ENCODE measurements at regions of chr19 and their contacts with region 1.

Region 1: DNA sequence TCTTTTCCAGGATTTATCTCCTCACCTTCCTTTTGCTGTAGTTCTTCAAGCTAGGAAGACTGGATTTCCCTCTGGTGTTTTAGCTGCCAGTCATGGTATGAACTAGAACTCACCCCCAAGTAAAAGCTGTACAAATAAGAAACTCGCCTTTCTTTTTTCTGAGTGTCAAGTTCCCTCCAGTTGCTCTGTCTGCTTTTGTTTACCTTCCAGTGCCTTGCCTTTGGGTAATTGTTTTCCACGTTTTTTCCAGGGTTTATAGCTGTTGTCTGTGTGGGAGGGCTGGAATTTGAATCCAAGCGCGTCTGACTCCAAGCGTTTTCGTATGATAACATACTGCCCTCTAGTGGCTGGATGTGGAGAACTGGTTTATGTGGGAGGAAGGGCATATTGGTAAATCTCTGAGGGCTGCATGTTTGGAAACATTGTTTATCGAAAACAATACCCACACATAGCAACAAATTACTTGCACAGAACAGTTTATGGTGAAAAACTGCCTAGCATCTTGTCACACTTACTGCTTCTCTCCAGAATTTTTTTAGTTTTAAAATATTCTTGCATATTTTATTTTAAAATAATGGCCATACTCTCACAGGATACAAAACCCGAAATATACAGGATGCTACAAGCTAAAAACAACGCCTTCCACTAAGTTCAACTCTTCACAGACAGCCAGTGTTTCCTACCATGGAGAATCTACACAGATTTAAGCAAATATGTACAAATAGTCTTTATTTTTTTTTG is 19.2 kb downstream of the RCN3 start:
- DNase-seq: peak; percentile 88
- ATAC-seq: peak; percentile 63
- H3K4me3 ChIP-seq: peak overlapping the region in 2 of 5 experiments; percentile 1 to 18
- H3K4me3 Mint-ChIP-seq: peak overlapping the region; percentile 73
- H3K27ac ChIP-seq: no peak overlapping the region
- H3K27ac Mint-ChIP-seq: peak overlapping the region; percentile 79
- H3K4me1 ChIP-seq: peaks cover 4 to 8% of the 10 kb centered on the region in 2 donors
- H3K4me1 Mint-ChIP-seq: peaks cover 13% of the 10 kb centered on the region
- H3K27me3 ChIP-seq: no peaks in the 10 kb centered on the region
- H3K27me3 Mint-ChIP-seq: no peaks in the 10 kb centered on the region
- CTCF ChIP-seq: peak; percentile 91

Region 2: DNA sequence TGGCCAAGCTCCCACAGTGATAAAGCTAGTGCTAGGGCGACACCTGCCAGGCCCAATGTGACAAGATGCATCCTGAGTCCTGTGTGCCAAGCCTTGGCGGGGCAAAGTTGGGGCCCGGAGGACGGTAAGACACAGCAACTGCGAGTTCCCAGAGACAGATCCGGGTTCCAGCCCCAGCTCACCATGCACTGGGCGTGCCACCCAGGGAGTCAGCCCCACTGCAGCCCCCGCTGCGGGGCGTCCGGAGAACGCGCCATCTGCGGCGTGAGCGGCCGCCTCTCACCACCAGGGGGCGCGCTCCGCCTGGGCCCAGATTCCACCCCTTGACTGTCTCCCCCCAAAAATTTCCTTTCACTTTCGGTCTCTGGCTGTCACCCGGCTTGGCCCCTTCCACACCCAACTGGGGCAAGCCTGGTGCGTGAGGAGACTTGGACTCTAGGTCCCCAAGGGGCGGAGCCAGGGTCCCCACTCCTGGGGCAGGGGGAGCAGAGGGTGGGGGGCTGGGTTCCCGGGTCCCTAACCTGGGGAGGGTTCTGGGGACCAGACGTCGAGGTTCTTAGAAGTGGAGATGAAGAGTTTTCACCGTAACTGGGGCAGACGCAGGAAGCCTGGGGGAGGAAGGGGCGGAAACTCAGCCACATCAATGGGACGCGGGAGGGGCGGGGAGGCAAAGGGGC is 73.0 kb before region 1 on chr19 and contains the start of gene FLT3LG:
- CTCF ChIA-PET with region 1: interaction called, 46 read pairs
- POLR2A ChIA-PET with region 1: interaction called, 4 read pairs
- intact Hi-C with region 1: loop called (anchors 1 kb)
- DNase-seq: peak; percentile 94
- ATAC-seq: peak; percentile 52
- H3K4me3 ChIP-seq: peak within 1 kb of the TSS in 4 of 5 experiments; percentile 53 to 98 (median 70)
- H3K4me3 Mint-ChIP-seq: peak within 1 kb of the TSS; percentile 93
- H3K27ac ChIP-seq: peak within 1 kb of the TSS; percentile 75 to 81
- H3K27ac Mint-ChIP-seq: peak within 1 kb of the TSS; percentile 97
- H3K4me1 ChIP-seq: peaks cover 43 to 73% of the 10 kb centered on the region in 2 donors
- H3K4me1 Mint-ChIP-seq: peaks cover 57% of the 10 kb centered on the region
- H3K27me3 ChIP-seq: no peaks in the 10 kb centered on the region
- H3K27me3 Mint-ChIP-seq: no peaks in the 10 kb centered on the region
- CTCF ChIP-seq: peak; percentile 89
- total RNA-seq, gene FLT3LG: 27.8 and 31.0 TPM in 2 replicates

Region 3: DNA sequence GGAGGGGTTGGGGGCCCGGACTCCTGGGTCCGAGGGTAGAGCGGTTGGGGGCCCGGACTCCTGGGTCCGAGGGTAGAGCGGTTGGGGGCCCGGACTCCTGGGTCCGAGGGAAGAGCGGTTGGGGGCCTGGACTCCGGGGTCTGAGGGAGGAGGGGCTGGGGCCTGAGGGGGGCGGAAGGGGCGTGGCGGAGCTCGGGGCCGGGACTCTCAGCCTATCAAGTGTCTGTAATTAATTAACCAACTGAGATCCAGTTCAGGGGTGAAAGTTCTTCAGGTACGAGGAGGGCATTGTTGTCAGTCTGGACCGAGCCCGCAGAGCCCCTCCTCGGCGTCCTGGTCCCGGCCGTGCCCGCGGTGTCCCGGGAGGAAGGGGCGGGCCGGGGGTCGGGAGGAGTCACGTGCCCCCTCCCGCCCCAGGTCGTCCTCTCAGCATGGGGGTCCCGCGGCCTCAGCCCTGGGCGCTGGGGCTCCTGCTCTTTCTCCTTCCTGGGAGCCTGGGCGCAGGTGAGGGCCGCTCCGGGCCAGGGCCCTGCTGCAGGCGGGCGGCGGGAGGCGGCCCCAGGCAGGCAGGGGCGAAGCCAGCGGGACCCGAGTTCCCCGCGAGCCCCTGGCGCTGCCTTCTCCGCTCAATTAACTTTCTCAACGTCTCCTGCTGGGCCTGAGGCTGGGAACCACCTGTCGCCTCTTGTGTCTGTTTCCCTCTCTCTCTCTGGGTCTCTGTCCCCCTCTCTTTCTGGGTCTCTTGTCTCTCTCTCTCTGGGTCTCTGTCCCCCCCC is 33.8 kb before region 1 on chr19:
- CTCF ChIA-PET with region 1: interaction called, 13 read pairs
- POLR2A ChIA-PET with region 1: interaction called, 10 read pairs
- intact Hi-C with region 1: no loop called
- DNase-seq: peak; percentile 64
- ATAC-seq: peak; percentile 73
- H3K4me3 ChIP-seq: peak overlapping the region; percentile 44 to 84 (median 79)
- H3K4me3 Mint-ChIP-seq: peak overlapping the region; percentile 91
- H3K27ac ChIP-seq: peak overlapping the region; percentile 64 to 79
- H3K27ac Mint-ChIP-seq: peak overlapping the region; percentile 88
- H3K4me1 ChIP-seq: peaks cover 26 to 34% of the 10 kb centered on the region in 2 donors
- H3K4me1 Mint-ChIP-seq: peaks cover 40% of the 10 kb centered on the region
- H3K27me3 ChIP-seq: no peaks in the 10 kb centered on the region
- H3K27me3 Mint-ChIP-seq: no peaks in the 10 kb centered on the region
- CTCF ChIP-seq: no peak

Region 4: DNA sequence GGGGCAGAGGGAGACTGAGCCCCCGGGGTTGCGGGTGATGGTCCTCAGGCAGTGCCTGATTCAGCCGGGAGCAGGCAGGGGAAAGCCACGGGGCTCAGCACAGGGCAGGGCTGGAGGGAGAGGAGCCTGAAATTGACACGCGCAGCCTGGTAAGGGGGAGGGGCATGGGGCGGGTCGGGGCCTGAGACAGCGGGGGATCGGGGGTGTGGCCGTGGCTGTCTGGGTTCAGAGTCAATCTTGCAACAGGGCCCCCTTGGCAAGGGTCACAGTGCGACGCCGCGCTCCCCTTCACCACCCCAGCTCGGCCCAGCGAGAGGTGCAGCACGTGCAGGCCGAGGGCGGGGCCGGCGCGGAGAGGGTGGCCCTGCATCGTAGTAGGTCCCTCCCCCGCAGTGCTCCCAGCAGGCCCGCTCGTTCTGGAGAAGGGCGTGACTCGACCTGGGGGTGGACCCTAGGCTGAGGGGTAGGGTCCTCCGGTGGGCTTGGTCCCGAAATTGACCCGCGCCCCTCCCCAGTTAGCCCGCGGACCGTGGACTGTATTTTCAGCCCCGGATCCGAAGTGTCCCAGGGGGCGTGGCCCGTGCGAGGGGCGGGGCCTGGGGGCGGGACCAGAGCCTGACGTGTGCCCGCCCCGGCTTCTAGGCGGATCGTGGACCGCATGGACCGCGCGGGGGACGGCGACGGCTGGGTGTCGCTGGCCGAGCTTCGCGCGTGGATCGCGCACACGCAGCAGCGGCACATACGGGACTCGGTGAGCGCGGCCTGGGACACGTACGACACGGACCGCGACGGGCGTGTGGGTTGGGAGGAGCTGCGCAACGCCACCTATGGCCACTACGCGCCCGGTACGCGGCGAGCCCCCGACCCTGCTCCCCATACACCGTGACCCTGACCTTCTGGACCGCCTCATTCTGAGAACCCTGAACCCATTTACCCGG is 13.2 kb before region 1 on chr19:
- CTCF ChIA-PET with region 1: interaction called, 59 read pairs
- POLR2A ChIA-PET with region 1: interaction called, 4 read pairs
- intact Hi-C with region 1: no loop called
- DNase-seq: peak; percentile 93
- ATAC-seq: peak; percentile 85
- H3K4me3 ChIP-seq: peak overlapping the region; percentile 16 to 76 (median 61)
- H3K4me3 Mint-ChIP-seq: peak overlapping the region; percentile 86
- H3K27ac ChIP-seq: no peak overlapping the region
- H3K27ac Mint-ChIP-seq: peak overlapping the region; percentile 27
- H3K4me1 ChIP-seq: peaks cover 32 to 47% of the 10 kb centered on the region in 2 donors
- H3K4me1 Mint-ChIP-seq: peaks cover 40% of the 10 kb centered on the region
- H3K27me3 ChIP-seq: peaks cover 0 to 6% (median 1%) of the 10 kb centered on the region in 4 experiments
- H3K27me3 Mint-ChIP-seq: no peaks in the 10 kb centered on the region
- CTCF ChIP-seq: peak; percentile 64

Region 5: GRCh38 chr19:49570138-49570856 is 23.3 kb after region 1 on chr19:
- CTCF ChIA-PET with region 1: interaction called, 42 read pairs
- POLR2A ChIA-PET with region 1: interaction called, 10 read pairs
- intact Hi-C with region 1: loop called (anchors 1 kb)
- DNase-seq: peak; percentile 89
- ATAC-seq: peak; percentile 82
- H3K4me3 ChIP-seq: no peak overlapping the region
- H3K4me3 Mint-ChIP-seq: peak overlapping the region; percentile 40
- H3K27ac ChIP-seq: peak overlapping the region in 1 of 2 donors; percentile 16
- H3K27ac Mint-ChIP-seq: peak overlapping the region; percentile 71
- H3K4me1 ChIP-seq: peaks cover 12 to 37% of the 10 kb centered on the region in 2 donors
- H3K4me1 Mint-ChIP-seq: peaks cover 25% of the 10 kb centered on the region
- H3K27me3 ChIP-seq: no peaks in the 10 kb centered on the region
- H3K27me3 Mint-ChIP-seq: no peaks in the 10 kb centered on the region
- CTCF ChIP-seq: peak; percentile 100

Measured in B cell (primary cell).